OCI-LY7 (cell line): ENCODE measurements at regions of chr2 and their contacts with region 1.

Region 1: GRCh38 chr2:74587664-74588277 is 33.3 kb downstream of the DOK1 start:
- DNase-seq: peak; percentile 73
- H3K4me3 ChIP-seq: no peak overlapping the region
- H3K27ac ChIP-seq: no peak overlapping the region
- H3K4me1 ChIP-seq: peaks cover 6% of the 10 kb centered on the region
- CTCF ChIP-seq: peak; percentile 92

Region 2: GRCh38 chr2:74250189-74250631 is 337.6 kb before region 1 on chr2:
- CTCF ChIA-PET with region 1: interaction called, 3 read pairs
- POLR2A ChIA-PET with region 1: no interaction called
- intact Hi-C with region 1: loop called (anchors 5 kb)
- DNase-seq: peak; percentile 77
- H3K4me3 ChIP-seq: no peak overlapping the region
- H3K27ac ChIP-seq: no peak overlapping the region
- H3K4me1 ChIP-seq: no peaks in the 10 kb centered on the region
- CTCF ChIP-seq: peak; percentile 99

Region 3: DNA sequence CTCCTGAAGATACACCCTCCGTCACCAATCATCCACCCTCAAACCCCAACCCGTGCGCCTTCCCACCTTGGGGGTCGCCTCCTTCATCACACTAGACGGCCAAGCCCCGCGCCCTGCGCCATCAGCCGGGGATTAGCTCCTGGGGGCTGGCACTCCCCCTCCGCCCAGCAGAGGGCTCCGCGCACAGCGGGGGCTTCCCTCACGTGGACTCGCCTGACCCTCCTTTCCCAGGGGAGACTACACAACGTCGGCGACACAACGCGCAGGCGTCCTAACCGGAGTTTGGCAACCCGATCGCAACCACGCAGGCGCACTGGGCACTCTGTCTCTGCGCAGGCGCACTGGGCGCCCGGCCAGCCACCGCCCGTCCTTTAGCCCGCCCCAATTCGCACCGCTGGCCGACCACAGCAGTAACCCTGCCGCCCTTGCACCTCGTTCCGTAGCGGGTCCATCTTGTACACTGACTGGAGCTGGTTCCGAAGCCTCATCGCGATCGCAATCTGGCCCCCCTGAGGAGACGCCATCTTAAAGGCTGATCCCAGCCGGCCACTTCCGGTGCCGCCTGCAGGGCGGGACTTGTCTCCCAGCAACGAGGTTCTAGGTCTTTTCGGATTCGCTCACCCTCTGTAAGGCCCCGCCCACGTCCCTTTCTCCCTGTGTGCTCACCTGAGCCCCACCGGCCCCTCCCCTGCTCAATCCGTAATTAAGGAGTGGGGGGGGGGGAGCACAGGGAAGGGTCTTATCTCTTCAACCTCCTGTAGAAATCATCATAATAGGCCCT is 80.4 kb before region 1 on chr2 and contains the start of gene PCGF1:
- CTCF ChIA-PET with region 1: interaction called, 3 read pairs
- POLR2A ChIA-PET with region 1: interaction called, 4 read pairs
- intact Hi-C with region 1: loop called (anchors 1 kb)
- DNase-seq: peak; percentile 99
- H3K4me3 ChIP-seq: peak within 1 kb of the TSS; percentile 77
- H3K27ac ChIP-seq: peak within 1 kb of the TSS; percentile 81
- H3K4me1 ChIP-seq: peaks cover 25% of the 10 kb centered on the region
- CTCF ChIP-seq: peak; percentile 76
- total RNA-seq, gene PCGF1: 9.9 and 16.7 TPM in 2 replicates

Region 4: GRCh38 chr2:74553892-74554645 is 33.7 kb before region 1 on chr2 and contains the start of gene LOXL3:
- CTCF ChIA-PET with region 1: interaction called, 3 read pairs
- POLR2A ChIA-PET with region 1: no interaction called
- intact Hi-C with region 1: loop called (anchors 5 kb)
- DNase-seq: peak; percentile 69
- H3K4me3 ChIP-seq: peak within 1 kb of the TSS; percentile 94
- H3K27ac ChIP-seq: no peak within 1 kb of the TSS
- H3K4me1 ChIP-seq: peaks cover 13% of the 10 kb centered on the region
- CTCF ChIP-seq: no peak
- total RNA-seq, gene LOXL3: 0.72 and 0.98 TPM in 2 replicates

Region 5: DNA sequence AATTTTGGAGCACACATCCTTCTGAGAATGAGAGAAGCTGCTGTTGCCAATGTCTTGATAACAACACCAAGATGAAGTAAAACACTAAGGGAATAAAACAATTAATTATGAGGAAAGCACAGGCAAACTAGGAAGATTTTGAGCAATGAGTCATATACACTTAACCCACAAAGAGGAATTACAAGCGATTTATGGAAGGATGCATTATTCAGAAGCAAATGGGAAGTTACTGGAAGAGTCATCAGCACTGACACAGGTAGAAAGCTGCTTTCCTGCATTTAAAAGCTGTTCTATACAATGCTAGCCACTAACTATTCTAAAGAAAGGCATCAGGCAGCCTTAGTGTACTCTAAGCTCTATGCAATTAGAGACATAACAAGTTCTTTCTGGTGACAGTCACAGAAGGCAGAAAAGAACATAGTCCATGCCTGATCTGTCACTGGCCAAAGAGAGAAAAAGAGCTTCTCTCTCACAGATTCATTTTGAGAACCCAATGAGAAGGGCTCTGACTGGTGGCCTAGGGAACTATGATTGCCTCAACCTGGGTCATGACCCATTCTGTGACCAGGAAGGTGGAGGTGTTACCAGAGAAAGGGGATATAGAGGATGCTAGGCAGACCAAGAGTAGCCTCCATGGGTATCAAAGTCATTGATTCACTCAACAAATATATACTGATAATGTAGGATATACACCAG is 15.0 kb after region 1 on chr2:
- CTCF ChIA-PET with region 1: interaction called, 4 read pairs
- POLR2A ChIA-PET with region 1: interaction called, 14 read pairs
- intact Hi-C with region 1: no loop called
- DNase-seq: no peak
- H3K4me3 ChIP-seq: no peak overlapping the region
- H3K27ac ChIP-seq: no peak overlapping the region
- H3K4me1 ChIP-seq: no peaks in the 10 kb centered on the region
- CTCF ChIP-seq: no peak